K562 (cell line): ENCODE measurements at regions of chr6 and their contacts with region 1.

Region 1: DNA sequence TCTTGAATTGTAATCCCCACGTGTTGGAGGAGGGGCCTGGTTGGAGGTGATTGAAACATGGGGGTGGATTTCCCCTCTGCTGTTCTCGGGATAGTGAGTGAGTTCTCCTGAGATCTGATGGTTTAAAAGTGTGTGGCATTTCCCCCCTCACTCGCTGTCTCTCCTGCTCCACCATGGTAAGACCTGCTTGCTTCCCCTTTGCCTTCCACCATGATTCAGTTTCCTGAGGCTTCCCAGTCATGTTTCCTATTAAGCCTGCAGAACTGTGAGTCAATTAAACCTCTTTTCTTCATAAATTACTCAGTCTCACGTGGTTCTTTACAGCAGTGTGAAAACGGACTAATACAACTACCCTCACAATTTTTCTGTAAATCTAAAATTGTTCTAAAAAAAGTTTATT is 26.8 kb upstream of the FAM184A start:
- DNase-seq: no peak
- ATAC-seq: no peak
- H3K4me3 ChIP-seq: no peak overlapping the region
- H3K27ac ChIP-seq: no peak overlapping the region
- H3K4me1 ChIP-seq: peaks cover 0 to 6% of the 10 kb centered on the region in 2 experiments; a peak in 2 of 5 replicates
- H3K27me3 ChIP-seq: no peaks in the 10 kb centered on the region
- CTCF ChIP-seq: no peak
- EP300 ChIP-seq: no peak
- POLR2A ChIP-seq: no peak
- RAD21 ChIP-seq: no peak

Region 2: GRCh38 chr6:118791499-118791898 is 313.8 kb before region 1 on chr6:
- CTCF ChIA-PET with region 1: no interaction called
- POLR2A ChIA-PET with region 1: no interaction called
- in situ Hi-C with region 1: loop called (anchors 10 kb)
- intact Hi-C with region 1: no loop called
- DNase-seq: no peak
- ATAC-seq: no peak
- H3K4me3 ChIP-seq: no peak overlapping the region
- H3K27ac ChIP-seq: no peak overlapping the region
- H3K4me1 ChIP-seq: peaks cover 0 to 3% of the 10 kb centered on the region in 2 experiments; a peak in 2 of 5 replicates
- H3K27me3 ChIP-seq: no peaks in the 10 kb centered on the region
- CTCF ChIP-seq: no peak
- EP300 ChIP-seq: no peak
- POLR2A ChIP-seq: no peak
- RAD21 ChIP-seq: no peak

Region 3: GRCh38 chr6:119129148-119129967 is 24.1 kb after region 1 on chr6:
- CTCF ChIA-PET with region 1: no interaction called
- POLR2A ChIA-PET with region 1: no interaction called
- in situ Hi-C with region 1: no loop called
- intact Hi-C with region 1: no loop called
- DNase-seq: peak; percentile 57 to 86 (median 60)
- ATAC-seq: peak; percentile 84
- H3K4me3 ChIP-seq: no peak overlapping the region
- H3K27ac ChIP-seq: peak overlapping the region; percentile 27; the same call in 1 of the 3 replicates
- H3K4me1 ChIP-seq: peaks cover 0 to 20% of the 10 kb centered on the region in 2 experiments; a peak in 3 of 5 replicates
- H3K27me3 ChIP-seq: no peaks in the 10 kb centered on the region
- CTCF ChIP-seq: peak; percentile 61 to 90 (median 75); a peak in 5 of 6 replicates
- EP300 ChIP-seq: no peak
- POLR2A ChIP-seq: no peak
- RAD21 ChIP-seq: peak; percentile 88 to 90

Region 4: DNA sequence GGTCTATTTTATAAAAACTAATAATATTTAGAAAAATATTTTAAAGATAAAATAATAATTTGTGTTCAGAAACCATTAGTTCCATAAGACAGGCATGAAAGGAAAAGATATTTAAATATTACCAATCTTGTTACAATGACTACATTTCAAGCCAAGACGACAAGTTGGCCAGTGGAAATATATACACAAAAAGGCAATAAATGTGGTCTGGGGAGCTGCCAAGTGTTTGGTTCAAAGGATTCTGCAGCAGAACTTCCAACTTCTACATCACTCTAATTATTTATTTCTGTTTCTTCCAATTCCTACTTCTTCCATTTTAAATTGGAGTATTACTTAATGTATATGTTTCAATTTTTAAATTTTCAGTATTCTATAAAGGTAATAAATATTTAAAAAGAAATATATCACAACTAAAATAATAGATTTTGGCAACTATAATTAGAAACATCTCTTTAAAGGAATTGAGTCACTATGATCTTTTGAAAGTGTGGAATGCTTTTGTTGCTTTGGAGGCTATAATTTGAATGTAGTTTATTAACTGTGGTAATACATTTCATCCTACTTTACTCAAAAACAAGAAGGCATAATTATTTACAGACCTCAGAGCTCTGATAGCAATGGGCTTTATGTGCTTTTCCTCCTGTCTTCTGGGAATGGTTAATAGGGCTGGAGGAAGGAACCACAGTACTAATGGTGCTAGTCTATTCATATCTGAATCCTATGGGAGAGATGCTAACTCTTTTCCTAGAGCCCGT is 102.9 kb after region 1 on chr6:
- CTCF ChIA-PET with region 1: no interaction called
- POLR2A ChIA-PET with region 1: no interaction called
- in situ Hi-C with region 1: no loop called
- intact Hi-C with region 1: no loop called
- DNase-seq: no peak
- ATAC-seq: no peak
- H3K4me3 ChIP-seq: no peak overlapping the region
- H3K27ac ChIP-seq: no peak overlapping the region
- H3K4me1 ChIP-seq: no peaks in the 10 kb centered on the region
- H3K27me3 ChIP-seq: no peaks in the 10 kb centered on the region
- CTCF ChIP-seq: no peak
- EP300 ChIP-seq: no peak
- POLR2A ChIP-seq: no peak
- RAD21 ChIP-seq: no peak